ENCODE measurements at regions of chr3 and their contacts with region 1.

Region 1: DNA sequence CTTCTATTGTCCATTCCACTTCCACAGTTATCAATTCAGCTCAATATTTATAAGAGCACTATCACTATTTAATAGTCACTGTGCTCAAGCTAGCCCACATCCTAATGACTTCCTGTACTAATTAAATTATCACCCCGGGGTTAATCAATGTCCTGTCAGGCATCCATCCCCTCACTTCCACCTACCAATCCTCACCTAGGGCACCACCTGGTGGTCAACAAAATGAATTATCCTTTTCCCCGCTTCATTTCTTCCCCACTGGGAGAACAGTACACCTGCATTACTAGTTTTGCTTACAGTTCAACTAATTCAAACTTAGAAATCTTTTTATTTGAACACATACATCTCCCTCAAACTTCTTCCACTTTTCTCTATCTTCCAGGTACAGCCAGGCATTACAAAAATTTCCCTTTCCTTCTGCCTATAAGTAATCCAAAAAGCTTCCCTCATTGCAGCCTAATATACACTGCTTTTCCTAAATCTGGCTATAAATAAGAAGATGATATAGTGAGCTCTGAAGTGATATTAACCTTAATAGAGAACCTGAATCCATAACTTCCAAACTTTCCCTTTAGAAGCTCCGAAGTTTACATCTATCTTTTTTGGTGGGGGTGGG is 68.5 kb downstream of the TMCC1 start:
- DNase-seq: peak; percentile 65
- ATAC-seq: peak; percentile 45
- H3K4me3 Mint-ChIP-seq: no peak overlapping the region
- H3K27ac Mint-ChIP-seq: no peak overlapping the region
- H3K4me1 Mint-ChIP-seq: peaks cover 13% of the 10 kb centered on the region
- H3K27me3 Mint-ChIP-seq: no peaks in the 10 kb centered on the region

Region 2: DNA sequence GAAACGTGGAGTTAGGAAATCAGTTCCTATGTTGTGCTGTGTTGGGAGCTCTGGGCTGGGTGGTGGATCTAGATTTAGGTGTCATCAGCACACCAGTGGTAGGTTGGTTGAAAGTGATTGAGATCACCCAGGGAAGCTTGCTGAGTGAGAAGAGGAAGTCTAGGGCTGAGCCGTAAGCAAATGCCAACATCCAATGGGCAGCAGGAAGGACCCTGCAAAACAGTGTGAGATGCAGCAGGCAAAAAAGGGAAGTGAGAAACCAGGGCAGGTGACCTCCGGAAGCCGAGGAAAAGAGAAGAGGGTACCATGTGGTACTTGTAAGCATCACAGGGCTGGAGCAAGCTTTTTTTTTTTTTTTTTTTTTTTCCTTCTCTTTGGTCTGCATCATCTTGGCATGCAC is 591.5 kb before region 1 on chr3:
- CTCF ChIA-PET with region 1: no interaction called
- POLR2A ChIA-PET with region 1: no interaction called
- intact Hi-C with region 1: no loop called
- DNase-seq: no peak
- ATAC-seq: no peak
- H3K4me3 Mint-ChIP-seq: no peak overlapping the region
- H3K27ac Mint-ChIP-seq: no peak overlapping the region
- H3K4me1 Mint-ChIP-seq: peaks cover 13% of the 10 kb centered on the region
- H3K27me3 Mint-ChIP-seq: no peaks in the 10 kb centered on the region

Region 3: DNA sequence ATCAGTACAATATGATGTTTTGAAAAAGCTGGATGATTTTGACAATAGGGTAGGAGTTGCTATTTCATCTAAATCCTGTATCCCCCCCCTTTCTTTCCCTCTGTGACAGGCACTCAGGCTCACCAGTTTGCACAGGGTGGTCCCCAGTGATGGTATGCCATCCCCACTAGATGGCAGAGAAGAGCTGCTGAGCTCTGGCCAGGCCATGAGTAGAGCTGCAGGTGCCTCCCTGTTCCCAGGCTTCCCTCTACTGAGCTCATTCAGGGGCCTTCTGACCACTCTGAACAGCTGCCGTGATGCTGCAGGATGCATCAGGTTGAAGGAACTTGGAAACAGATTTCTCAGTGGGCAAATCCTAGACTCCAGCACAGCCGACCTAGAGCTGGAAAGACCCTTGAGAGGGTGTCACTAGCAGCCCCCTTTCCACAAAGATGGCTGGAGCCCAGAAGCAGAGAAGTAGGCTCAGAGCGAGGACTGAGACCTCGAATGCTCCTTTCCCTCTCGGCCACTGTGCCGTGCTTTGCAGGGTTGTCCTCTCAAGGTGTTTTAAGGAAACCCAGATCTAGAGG is 441.7 kb before region 1 on chr3:
- CTCF ChIA-PET with region 1: no interaction called
- POLR2A ChIA-PET with region 1: no interaction called
- intact Hi-C with region 1: loop called (anchors 2 to 10 kb)
- DNase-seq: peak; percentile 67
- ATAC-seq: peak; percentile 97
- H3K4me3 Mint-ChIP-seq: no peak overlapping the region
- H3K27ac Mint-ChIP-seq: no peak overlapping the region
- H3K4me1 Mint-ChIP-seq: no peaks in the 10 kb centered on the region
- H3K27me3 Mint-ChIP-seq: no peaks in the 10 kb centered on the region

Region 4: DNA sequence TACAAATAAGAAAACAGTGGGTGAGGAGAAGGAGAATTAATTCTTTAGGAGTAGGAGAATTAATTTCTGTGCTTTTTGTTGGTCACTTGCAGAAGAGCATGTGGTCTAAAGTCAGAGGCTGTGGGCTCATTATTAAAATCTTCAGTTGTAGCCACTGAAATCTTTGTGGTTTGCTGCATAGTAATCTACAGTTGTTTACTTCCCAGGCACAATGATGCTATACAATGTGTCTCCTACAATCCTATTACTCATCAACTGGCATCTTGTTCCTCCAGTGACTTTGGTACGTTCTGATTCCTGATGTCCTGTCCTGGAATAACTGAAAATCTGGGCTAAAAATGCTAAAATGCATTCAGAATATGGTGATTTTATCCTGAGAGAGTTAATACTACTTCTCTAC is 364.0 kb before region 1 on chr3:
- CTCF ChIA-PET with region 1: no interaction called
- POLR2A ChIA-PET with region 1: no interaction called
- intact Hi-C with region 1: no loop called
- DNase-seq: no peak
- ATAC-seq: no peak
- H3K4me3 Mint-ChIP-seq: no peak overlapping the region
- H3K27ac Mint-ChIP-seq: no peak overlapping the region
- H3K4me1 Mint-ChIP-seq: no peaks in the 10 kb centered on the region
- H3K27me3 Mint-ChIP-seq: no peaks in the 10 kb centered on the region

Region 5: GRCh38 chr3:129490242-129491045 is 334.6 kb before region 1 on chr3:
- CTCF ChIA-PET with region 1: interaction called, 13 read pairs
- POLR2A ChIA-PET with region 1: no interaction called
- intact Hi-C with region 1: loop called (anchors 1 kb)
- DNase-seq: peak; percentile 71
- ATAC-seq: peak; percentile 96
- H3K4me3 Mint-ChIP-seq: no peak overlapping the region
- H3K27ac Mint-ChIP-seq: no peak overlapping the region
- H3K4me1 Mint-ChIP-seq: no peaks in the 10 kb centered on the region
- H3K27me3 Mint-ChIP-seq: no peaks in the 10 kb centered on the region

Region 6: GRCh38 chr3:129650256-129650872 is 174.7 kb before region 1 on chr3:
- CTCF ChIA-PET with region 1: interaction called, 43 read pairs
- POLR2A ChIA-PET with region 1: no interaction called
- intact Hi-C with region 1: loop called (anchors 1 kb)
- DNase-seq: peak; percentile 77
- ATAC-seq: peak; percentile 68
- H3K4me3 Mint-ChIP-seq: no peak overlapping the region
- H3K27ac Mint-ChIP-seq: no peak overlapping the region
- H3K4me1 Mint-ChIP-seq: peaks cover 2% of the 10 kb centered on the region
- H3K27me3 Mint-ChIP-seq: no peaks in the 10 kb centered on the region

Region 7: GRCh38 chr3:129809297-129809696 is 15.7 kb before region 1 on chr3:
- CTCF ChIA-PET with region 1: interaction called, 21 read pairs
- POLR2A ChIA-PET with region 1: interaction called, 3 read pairs
- intact Hi-C with region 1: no loop called
- DNase-seq: no peak
- ATAC-seq: no peak
- H3K4me3 Mint-ChIP-seq: no peak overlapping the region
- H3K27ac Mint-ChIP-seq: no peak overlapping the region
- H3K4me1 Mint-ChIP-seq: peaks cover 6% of the 10 kb centered on the region
- H3K27me3 Mint-ChIP-seq: no peaks in the 10 kb centered on the region

Region 8: GRCh38 chr3:129934234-129935123 is 109.4 kb after region 1 on chr3:
- CTCF ChIA-PET with region 1: interaction called, 3 read pairs
- POLR2A ChIA-PET with region 1: no interaction called
- intact Hi-C with region 1: loop called (anchors 2 to 5 kb)
- DNase-seq: peak; percentile 41
- ATAC-seq: no peak
- H3K4me3 Mint-ChIP-seq: no peak overlapping the region
- H3K27ac Mint-ChIP-seq: no peak overlapping the region
- H3K4me1 Mint-ChIP-seq: peaks cover 5% of the 10 kb centered on the region
- H3K27me3 Mint-ChIP-seq: peaks cover 2% of the 10 kb centered on the region